CD4-positive, alpha-beta memory T cell (primary cell): ENCODE measurements at regions of chr7 and their contacts with region 1.

Region 1: DNA sequence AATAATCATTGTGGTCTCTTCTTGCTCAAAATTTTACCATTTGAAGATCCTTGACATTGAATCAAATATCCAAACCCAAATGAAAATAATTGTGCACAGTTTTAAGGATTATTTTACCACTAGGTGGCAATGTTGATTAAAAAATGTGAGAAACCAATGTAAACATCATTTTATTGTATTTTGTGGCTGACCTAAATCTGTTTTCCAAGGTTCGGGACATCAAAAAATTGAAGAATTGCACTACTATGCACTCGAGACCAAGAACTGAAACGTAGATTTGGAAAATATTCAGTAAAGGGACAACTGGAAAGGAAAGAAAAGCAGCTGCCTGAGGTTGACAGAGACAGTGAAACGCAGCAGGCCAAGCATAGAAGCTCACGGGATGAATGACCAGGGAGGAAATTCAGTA is 259.3 kb downstream of the SNX13 start:
- DNase-seq: peak in 4 of 5 donors; percentile 5 to 32 (median 22)
- H3K4me3 ChIP-seq: no peak overlapping the region
- H3K4me3 Mint-ChIP-seq: no peak overlapping the region
- H3K27ac ChIP-seq: no peak overlapping the region
- H3K27ac Mint-ChIP-seq: no peak overlapping the region
- H3K4me1 ChIP-seq: no peaks in the 10 kb centered on the region
- H3K4me1 Mint-ChIP-seq: no peaks in the 10 kb centered on the region
- H3K27me3 ChIP-seq: no peaks in the 10 kb centered on the region
- H3K27me3 Mint-ChIP-seq: peaks cover 0 to 3% of the 10 kb centered on the region in 2 donors

Region 2: DNA sequence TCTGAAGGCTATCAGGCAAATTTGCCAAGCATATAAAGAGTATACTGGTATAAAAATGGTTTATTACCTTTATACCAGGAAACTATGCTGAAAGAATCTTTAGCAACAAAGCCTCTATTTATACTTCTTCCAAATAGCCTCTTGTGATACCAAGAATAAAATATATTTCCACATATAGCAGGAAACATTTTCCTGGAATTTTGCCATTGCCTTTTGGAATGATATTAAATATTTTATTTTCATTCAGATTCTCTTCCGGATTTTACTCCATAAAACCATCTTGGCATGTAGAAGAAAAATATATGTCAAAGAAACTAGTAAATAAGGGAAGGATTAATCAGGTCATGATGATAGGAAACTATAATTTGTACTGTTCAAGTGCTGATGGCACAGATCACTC is 1233.1 kb before region 1 on chr7:
- CTCF ChIA-PET with region 1: no interaction called
- POLR2A ChIA-PET with region 1: no interaction called
- intact Hi-C with region 1: no loop called
- DNase-seq: no peak
- H3K4me3 ChIP-seq: no peak overlapping the region
- H3K4me3 Mint-ChIP-seq: no peak overlapping the region
- H3K27ac ChIP-seq: no peak overlapping the region
- H3K27ac Mint-ChIP-seq: no peak overlapping the region
- H3K4me1 ChIP-seq: no peaks in the 10 kb centered on the region
- H3K4me1 Mint-ChIP-seq: no peaks in the 10 kb centered on the region
- H3K27me3 ChIP-seq: no peaks in the 10 kb centered on the region
- H3K27me3 Mint-ChIP-seq: no peaks in the 10 kb centered on the region

Region 3: GRCh38 chr7:17234398-17235031 is 446.4 kb before region 1 on chr7:
- CTCF ChIA-PET with region 1: no interaction called
- POLR2A ChIA-PET with region 1: no interaction called
- intact Hi-C with region 1: no loop called
- DNase-seq: peak; percentile 84 to 92 (median 87)
- H3K4me3 ChIP-seq: peak overlapping the region; percentile 8 to 19
- H3K4me3 Mint-ChIP-seq: peak overlapping the region; percentile 73 to 89 (median 84)
- H3K27ac ChIP-seq: peak overlapping the region; percentile 93
- H3K27ac Mint-ChIP-seq: peak overlapping the region; percentile 98 to 100 (median 99)
- H3K4me1 ChIP-seq: peaks cover 34% of the 10 kb centered on the region
- H3K4me1 Mint-ChIP-seq: peaks cover 32 to 51% (median 39%) of the 10 kb centered on the region in 4 donors
- H3K27me3 ChIP-seq: no peaks in the 10 kb centered on the region
- H3K27me3 Mint-ChIP-seq: no peaks in the 10 kb centered on the region

Region 4: DNA sequence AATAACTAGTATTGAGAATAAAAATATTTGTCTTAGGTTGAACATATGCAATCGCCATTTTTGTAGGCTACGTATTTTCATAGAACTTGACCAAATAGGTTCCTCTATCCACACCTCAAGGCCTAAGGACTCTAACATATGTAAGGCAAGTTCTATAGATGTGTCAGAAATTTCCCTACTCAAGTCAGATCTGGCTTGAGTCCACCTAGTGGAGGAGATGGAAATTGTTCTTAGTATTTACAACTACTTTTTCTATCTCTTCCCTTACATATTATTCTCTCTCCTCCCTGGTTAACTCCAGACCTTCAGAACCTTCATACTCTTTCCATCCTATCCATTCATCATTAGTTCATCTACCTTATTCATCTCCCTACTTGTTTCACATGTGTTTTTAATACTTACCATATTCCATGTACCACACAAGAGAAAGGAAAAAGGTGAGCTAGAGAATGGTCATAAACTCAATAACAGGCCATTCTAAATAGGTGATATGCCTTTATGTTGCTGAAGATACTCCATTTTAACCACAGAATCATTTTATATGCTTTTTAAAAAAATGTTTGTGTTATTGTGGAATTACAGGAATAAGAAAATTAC is 640.1 kb after region 1 on chr7:
- CTCF ChIA-PET with region 1: interaction called, 5 read pairs
- POLR2A ChIA-PET with region 1: no interaction called
- intact Hi-C with region 1: loop called (anchors 1 kb)
- DNase-seq: peak in 4 of 5 donors; percentile 3 to 14 (median 8)
- H3K4me3 ChIP-seq: no peak overlapping the region
- H3K4me3 Mint-ChIP-seq: no peak overlapping the region
- H3K27ac ChIP-seq: no peak overlapping the region
- H3K27ac Mint-ChIP-seq: no peak overlapping the region
- H3K4me1 ChIP-seq: no peaks in the 10 kb centered on the region
- H3K4me1 Mint-ChIP-seq: peaks cover 0 to 4% (median under 1%) of the 10 kb centered on the region in 4 donors
- H3K27me3 ChIP-seq: no peaks in the 10 kb centered on the region
- H3K27me3 Mint-ChIP-seq: peaks cover 2 to 4% of the 10 kb centered on the region in 2 donors

Region 5: DNA sequence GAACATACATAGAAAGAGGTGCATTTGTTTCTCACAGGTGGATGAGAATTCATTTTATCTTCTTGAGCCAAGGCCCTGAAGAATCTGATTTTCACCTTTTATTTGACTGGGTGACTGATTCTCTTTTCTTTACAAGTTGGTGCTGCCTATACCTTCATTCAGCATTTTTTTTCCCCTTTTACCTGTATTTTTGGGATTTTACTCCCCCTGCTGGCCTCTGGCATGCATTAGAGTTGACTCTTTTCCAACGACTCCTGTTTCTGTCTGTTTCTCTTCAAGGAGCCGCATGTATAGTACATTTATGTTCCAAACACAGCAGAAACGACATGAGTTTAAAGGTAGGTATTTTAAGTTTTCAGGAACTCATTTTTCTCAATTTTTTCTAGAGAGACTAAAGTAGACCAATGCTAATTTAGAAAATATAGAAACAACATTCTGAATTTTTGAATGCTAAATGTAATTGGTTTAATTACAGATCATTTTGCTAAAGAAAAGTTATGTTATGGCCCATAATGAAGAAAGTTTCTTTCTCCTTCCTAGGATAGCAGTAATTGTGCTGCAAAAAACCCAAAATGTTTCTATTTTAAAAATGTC is 664.8 kb after region 1 on chr7:
- CTCF ChIA-PET with region 1: interaction called, 26 read pairs
- POLR2A ChIA-PET with region 1: no interaction called
- intact Hi-C with region 1: no loop called
- DNase-seq: peak in 4 of 5 donors; percentile 22 to 41 (median 32)
- H3K4me3 ChIP-seq: no peak overlapping the region
- H3K4me3 Mint-ChIP-seq: no peak overlapping the region
- H3K27ac ChIP-seq: no peak overlapping the region
- H3K27ac Mint-ChIP-seq: no peak overlapping the region
- H3K4me1 ChIP-seq: no peaks in the 10 kb centered on the region
- H3K4me1 Mint-ChIP-seq: no peaks in the 10 kb centered on the region
- H3K27me3 ChIP-seq: no peaks in the 10 kb centered on the region
- H3K27me3 Mint-ChIP-seq: peaks cover 3 to 6% of the 10 kb centered on the region in 2 donors

Region 6: DNA sequence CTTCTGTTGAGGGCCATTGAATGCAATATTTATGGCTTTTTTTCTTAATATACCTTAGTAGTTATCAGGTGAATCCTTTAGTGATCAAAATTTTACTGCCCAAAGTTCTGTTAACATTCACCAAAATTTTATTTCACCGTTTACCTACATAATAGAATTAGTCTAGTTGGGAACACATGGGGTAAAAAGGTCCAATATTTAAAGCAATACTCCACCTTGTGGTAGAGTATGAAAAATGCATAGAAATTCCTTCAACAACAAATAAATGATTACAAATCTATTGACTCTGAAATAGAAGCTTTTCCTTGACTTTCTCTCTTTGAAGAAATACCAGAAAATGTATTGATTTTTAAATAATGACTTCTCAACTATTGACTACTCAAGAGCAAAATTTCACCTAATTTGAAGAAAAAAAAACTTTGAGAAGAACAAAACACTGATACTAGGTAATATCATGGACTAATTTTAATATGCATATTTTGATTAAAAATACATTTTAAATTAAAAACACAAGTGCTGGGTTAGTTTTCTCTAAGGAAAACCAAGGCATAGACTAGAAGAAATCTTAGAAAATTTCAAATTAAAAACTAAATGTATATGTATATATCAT is 1984.6 kb after region 1 on chr7:
- CTCF ChIA-PET with region 1: interaction called, 13 read pairs
- POLR2A ChIA-PET with region 1: no interaction called
- intact Hi-C with region 1: no loop called
- DNase-seq: peak in 3 of 5 donors; percentile 13 to 17 (median 16)
- H3K4me3 ChIP-seq: no peak overlapping the region
- H3K4me3 Mint-ChIP-seq: no peak overlapping the region
- H3K27ac ChIP-seq: no peak overlapping the region
- H3K27ac Mint-ChIP-seq: no peak overlapping the region
- H3K4me1 ChIP-seq: peaks cover 3% of the 10 kb centered on the region
- H3K4me1 Mint-ChIP-seq: peaks cover 1 to 11% (median 7%) of the 10 kb centered on the region in 4 donors
- H3K27me3 ChIP-seq: no peaks in the 10 kb centered on the region
- H3K27me3 Mint-ChIP-seq: no peaks in the 10 kb centered on the region